ENCODE measurements at regions of chr12 and their contacts with region 1.

Region 1: DNA sequence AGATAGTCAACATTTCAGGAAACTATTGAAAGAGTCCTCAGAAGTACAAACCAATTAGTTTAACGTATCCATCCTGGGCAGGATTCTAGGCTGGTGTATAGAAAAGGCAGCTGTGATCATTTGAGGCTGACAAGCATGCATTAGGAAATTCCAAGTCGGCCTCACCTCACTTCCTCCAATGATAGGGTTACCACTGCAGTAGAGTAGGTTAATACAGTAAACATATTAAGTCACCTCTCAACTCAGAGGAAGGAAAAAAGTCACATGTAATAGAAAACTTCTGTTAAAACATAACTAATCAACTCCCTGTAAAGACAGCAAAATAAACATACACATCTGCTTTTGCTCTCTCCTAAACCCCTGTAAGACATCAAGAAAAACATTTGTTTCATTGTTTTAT is 33.5 kb downstream of the MED13L start:
- DNase-seq: no peak
- H3K4me3 ChIP-seq: no peak overlapping the region
- CTCF ChIP-seq: no peak
- POLR2A ChIP-seq: no peak

Region 2: DNA sequence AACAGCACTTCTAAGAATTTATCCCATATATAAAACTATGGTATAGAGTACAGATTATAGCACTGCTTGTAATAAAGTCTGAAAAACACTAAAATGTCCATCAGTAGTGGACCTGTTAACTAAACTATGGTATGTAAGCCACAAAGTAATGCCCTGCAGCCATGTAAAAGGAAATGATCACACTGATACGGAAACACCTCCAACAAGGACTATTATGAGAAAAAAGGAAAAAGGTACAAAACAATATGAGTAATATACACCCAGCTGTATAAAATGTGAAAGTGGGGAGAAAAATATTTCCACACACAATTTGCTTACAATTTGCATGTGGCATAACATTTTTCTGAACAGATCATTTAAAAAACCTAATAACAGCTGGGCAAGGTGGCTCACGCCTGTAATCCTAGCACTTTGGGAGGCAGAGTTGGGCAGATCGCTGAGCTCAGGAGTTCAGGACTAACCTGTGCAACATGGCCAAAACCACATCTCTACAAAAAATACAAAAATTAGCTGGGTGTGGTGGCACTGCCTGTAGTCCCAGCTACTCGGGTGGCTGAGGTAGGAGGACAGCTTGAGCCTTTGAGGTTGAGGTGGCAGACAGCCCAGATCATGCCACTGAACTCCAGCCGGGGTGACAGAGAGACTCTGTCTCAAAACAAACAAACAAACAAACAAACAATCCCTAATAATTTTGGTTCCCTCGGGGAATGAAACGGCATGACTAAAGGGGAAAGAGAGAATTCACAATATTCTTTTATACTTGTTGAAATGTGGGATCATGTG is 217.0 kb before region 1 on chr12:
- intact Hi-C with region 1: loop called (anchors 10 kb)
- DNase-seq: no peak
- H3K4me3 ChIP-seq: no peak overlapping the region
- CTCF ChIP-seq: no peak
- POLR2A ChIP-seq: no peak

Region 3: GRCh38 chr12:116066381-116067230 is 177.4 kb before region 1 on chr12:
- intact Hi-C with region 1: no loop called
- DNase-seq: no peak
- H3K4me3 ChIP-seq: no peak overlapping the region
- CTCF ChIP-seq: no peak
- POLR2A ChIP-seq: no peak

Region 4: DNA sequence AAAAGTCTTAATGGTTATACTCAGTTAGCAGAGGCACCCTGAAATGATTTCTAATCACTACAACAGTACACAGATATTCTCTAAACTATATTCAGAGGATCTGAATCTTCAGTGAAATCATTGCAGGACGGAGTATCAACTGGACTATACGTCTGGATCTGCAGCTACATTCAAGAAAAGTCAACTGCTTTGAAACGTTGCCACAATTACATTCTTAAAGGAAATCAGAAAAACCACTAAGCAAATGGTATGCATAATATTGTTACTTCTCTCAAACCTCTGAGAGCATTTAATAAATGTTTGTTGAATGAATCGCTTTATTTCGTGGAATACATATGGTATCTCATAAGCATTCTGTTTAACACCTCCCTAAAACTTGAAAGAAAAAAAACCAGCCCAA is 33.9 kb before region 1 on chr12:
- intact Hi-C with region 1: no loop called
- DNase-seq: no peak
- H3K4me3 ChIP-seq: no peak overlapping the region
- CTCF ChIP-seq: no peak
- POLR2A ChIP-seq: no peak

Measured in lower leg skin (tissue), 4 donors.